Heart right ventricle (tissue), 16 donors: ENCODE measurements at regions of chr7 and their contacts with region 1.

Region 1: GRCh38 chr7:139777948-139778841 is at the start of gene HIPK2:
- DNase-seq: peak; percentile 81 to 83
- ATAC-seq: peak; percentile 68 to 91 (median 82)
- H3K4me3 ChIP-seq: peak within 1 kb of the TSS; percentile 63 to 91 (median 83)
- H3K27ac ChIP-seq: peak within 1 kb of the TSS; percentile 88 to 97 (median 94)
- H3K4me1 ChIP-seq: peaks cover 0 to 41% (median 30%) of the 10 kb centered on the region in 9 donors
- H3K27me3 ChIP-seq: no peaks in the 10 kb centered on the region
- CTCF ChIP-seq: no peak
- total RNA-seq, gene HIPK2: 99.4 to 203 (median 136) TPM

Region 2: GRCh38 chr7:139645572-139646523 is 132.3 kb before region 1 on chr7:
- intact Hi-C with region 1: loop called (anchors 1 to 5 kb)
- DNase-seq: peak; percentile 78 to 89
- ATAC-seq: peak; percentile 49 to 74 (median 68)
- H3K4me3 ChIP-seq: no peak overlapping the region
- H3K27ac ChIP-seq: peak overlapping the region in 7 of 10 donors; percentile 16 to 84 (median 79)
- H3K4me1 ChIP-seq: peaks cover 5 to 58% (median 48%) of the 10 kb centered on the region in 9 donors
- H3K27me3 ChIP-seq: no peaks in the 10 kb centered on the region
- CTCF ChIP-seq: peak; percentile 88 to 94 (median 91)

Region 3: DNA sequence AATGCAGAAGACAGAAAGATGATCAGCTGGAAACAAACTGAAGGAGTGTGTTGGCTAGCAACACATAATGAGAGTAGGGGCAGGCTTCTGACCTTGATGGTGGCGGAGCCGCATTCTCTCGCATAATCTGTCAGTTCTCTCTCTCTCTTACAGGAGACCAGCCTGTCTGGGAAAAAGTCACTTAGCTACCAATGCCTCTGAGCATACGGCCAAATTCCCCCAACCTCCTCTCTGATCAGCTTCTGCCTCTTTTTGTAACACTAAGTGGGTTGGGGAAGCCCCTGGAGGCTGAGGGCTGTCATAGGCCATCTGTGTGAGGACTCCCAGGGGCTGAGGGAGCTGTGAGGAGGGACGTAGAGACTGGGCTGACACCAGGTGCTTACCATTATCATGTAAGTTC is 105.0 kb before region 1 on chr7:
- intact Hi-C with region 1: no loop called
- DNase-seq: no peak
- ATAC-seq: peak in 7 of 8 donors; percentile 34 to 73 (median 53)
- H3K4me3 ChIP-seq: no peak overlapping the region
- H3K27ac ChIP-seq: peak overlapping the region; percentile 34 to 77 (median 58)
- H3K4me1 ChIP-seq: peaks cover 3 to 32% (median 22%) of the 10 kb centered on the region in 9 donors
- H3K27me3 ChIP-seq: no peaks in the 10 kb centered on the region
- CTCF ChIP-seq: no peak

Region 4: GRCh38 chr7:139702811-139703486 is 75.2 kb before region 1 on chr7:
- intact Hi-C with region 1: loop called in 1 of 10 experiments (anchors 5 kb)
- DNase-seq: no peak
- ATAC-seq: peak in 7 of 8 donors; percentile 41 to 74 (median 66)
- H3K4me3 ChIP-seq: no peak overlapping the region
- H3K27ac ChIP-seq: peak overlapping the region; percentile 73 to 91 (median 84)
- H3K4me1 ChIP-seq: peaks cover 16 to 83% (median 58%) of the 10 kb centered on the region in 9 donors
- H3K27me3 ChIP-seq: no peaks in the 10 kb centered on the region
- CTCF ChIP-seq: no peak

Region 5: DNA sequence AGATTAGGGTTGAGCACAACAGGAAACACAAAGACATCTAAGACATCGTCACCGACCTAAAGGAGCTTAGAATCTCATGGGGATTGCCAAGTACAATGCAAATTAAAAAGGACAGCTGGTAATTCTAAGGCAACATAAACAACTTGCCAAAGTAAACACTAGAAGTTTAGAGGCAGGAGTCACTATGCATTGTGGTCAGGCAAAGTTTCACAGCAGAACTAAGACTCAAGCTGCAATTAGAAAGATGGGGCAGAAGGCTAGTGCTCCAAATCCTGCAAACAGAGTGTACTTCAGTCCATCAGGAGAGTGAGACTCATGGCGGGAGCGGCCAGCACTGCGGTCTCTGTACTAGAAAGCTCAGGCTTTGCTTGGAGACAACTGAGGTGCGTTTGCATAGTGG is 53.1 kb before region 1 on chr7:
- intact Hi-C with region 1: loop called in 4 of 10 experiments (anchors 5 to 10 kb)
- DNase-seq: no peak
- ATAC-seq: no peak
- H3K4me3 ChIP-seq: no peak overlapping the region
- H3K27ac ChIP-seq: peak overlapping the region in 6 of 10 donors; percentile 1 to 90 (median 44)
- H3K4me1 ChIP-seq: peaks cover 27 to 89% (median 84%) of the 10 kb centered on the region in 9 donors
- H3K27me3 ChIP-seq: no peaks in the 10 kb centered on the region
- CTCF ChIP-seq: no peak

Region 6: DNA sequence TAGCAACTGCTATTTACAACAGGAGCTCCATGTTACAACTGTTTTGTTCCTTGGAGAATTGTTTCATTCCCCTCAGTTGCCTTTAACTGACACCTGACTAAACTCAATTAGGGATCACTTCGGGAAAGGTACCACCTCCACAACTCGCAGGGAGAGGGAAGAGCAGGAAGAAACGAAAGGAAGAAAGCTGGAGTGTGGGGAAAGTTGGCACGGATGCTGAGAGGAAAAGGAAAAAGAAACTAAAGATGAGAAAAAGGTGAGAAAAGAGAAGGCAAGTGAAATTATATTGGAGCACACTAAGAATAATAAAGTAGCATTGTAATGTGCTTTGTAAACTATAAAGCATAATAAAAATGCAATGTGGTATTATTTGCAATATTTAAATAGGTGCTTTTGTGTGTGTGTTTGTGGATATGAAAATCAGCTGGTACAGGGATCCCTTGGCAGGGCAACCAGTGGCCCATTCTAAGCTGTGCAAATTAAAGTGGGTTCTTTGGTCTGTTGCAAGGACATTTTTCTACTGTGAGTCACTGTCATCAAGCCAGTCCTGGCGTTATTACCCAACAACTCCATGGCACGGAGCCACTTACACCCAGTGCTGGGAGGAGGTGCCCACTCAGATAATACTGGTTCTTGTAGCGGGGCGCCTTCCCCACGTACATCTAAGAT is 46.3 kb before region 1 on chr7:
- intact Hi-C with region 1: loop called in 7 of 10 experiments (anchors 5 to 10 kb)
- DNase-seq: peak; percentile 76 to 85
- ATAC-seq: peak; percentile 36 to 82 (median 76)
- H3K4me3 ChIP-seq: no peak overlapping the region
- H3K27ac ChIP-seq: peak overlapping the region; percentile 81 to 92 (median 90)
- H3K4me1 ChIP-seq: peaks cover 35 to 91% (median 86%) of the 10 kb centered on the region in 9 donors
- H3K27me3 ChIP-seq: no peaks in the 10 kb centered on the region
- CTCF ChIP-seq: no peak

Region 7: GRCh38 chr7:139737221-139738100 is 40.7 kb before region 1 on chr7:
- intact Hi-C with region 1: loop called in 6 of 10 experiments (anchors 5 kb)
- DNase-seq: no peak
- ATAC-seq: no peak
- H3K4me3 ChIP-seq: no peak overlapping the region
- H3K27ac ChIP-seq: peak overlapping the region; percentile 74 to 92 (median 90)
- H3K4me1 ChIP-seq: peaks cover 43 to 100% (median 97%) of the 10 kb centered on the region in 9 donors
- H3K27me3 ChIP-seq: no peaks in the 10 kb centered on the region
- CTCF ChIP-seq: no peak

Region 8: GRCh38 chr7:139995017-139995931 is 217.1 kb after region 1 on chr7:
- intact Hi-C with region 1: loop called in 9 of 10 experiments (anchors 5 to 10 kb)
- DNase-seq: peak; percentile 35 to 57
- ATAC-seq: peak; percentile 61 to 93 (median 84)
- H3K4me3 ChIP-seq: no peak overlapping the region
- H3K27ac ChIP-seq: no peak overlapping the region
- H3K4me1 ChIP-seq: peaks cover 0 to 9% (median 0%) of the 10 kb centered on the region in 9 donors
- H3K27me3 ChIP-seq: no peaks in the 10 kb centered on the region
- CTCF ChIP-seq: peak in 3 of 9 donors; percentile 16 to 26 (median 21)